ENCODE measurements at regions of chr9 and their contacts with region 1.

Region 1: GRCh38 chr9:31112491-31112890 is 1272.0 kb upstream of the ACO1 start:
- DNase-seq: no peak
- ATAC-seq: no peak
- H3K4me3 ChIP-seq: no peak overlapping the region
- H3K27ac ChIP-seq: no peak overlapping the region
- H3K4me1 ChIP-seq: no peaks in the 10 kb centered on the region
- H3K27me3 ChIP-seq: no peaks in the 10 kb centered on the region
- CTCF ChIP-seq: no peak

Region 2: GRCh38 chr9:31188496-31188895 is 76.0 kb after region 1 on chr9:
- CTCF ChIA-PET with region 1: no interaction called
- POLR2A ChIA-PET with region 1: interaction called, 12 read pairs
- intact Hi-C with region 1: no loop called
- DNase-seq: no peak
- ATAC-seq: no peak
- H3K4me3 ChIP-seq: no peak overlapping the region
- H3K27ac ChIP-seq: no peak overlapping the region
- H3K4me1 ChIP-seq: no peaks in the 10 kb centered on the region
- H3K27me3 ChIP-seq: 0 out of 2 replicates have a peak, but pooled peaks cover 5% of the 10 kb centered on the region
- CTCF ChIP-seq: no peak

Region 3: GRCh38 chr9:31623511-31623910 is 511.0 kb after region 1 on chr9:
- CTCF ChIA-PET with region 1: no interaction called
- POLR2A ChIA-PET with region 1: no interaction called
- intact Hi-C with region 1: no loop called
- DNase-seq: no peak
- ATAC-seq: no peak
- H3K4me3 ChIP-seq: no peak overlapping the region
- H3K27ac ChIP-seq: no peak overlapping the region
- H3K4me1 ChIP-seq: no peaks in the 10 kb centered on the region
- H3K27me3 ChIP-seq: no peaks in the 10 kb centered on the region
- CTCF ChIP-seq: no peak

Measured in PC-3 (cell line).